ENCODE measurements at regions of chr17 and their contacts with region 1.

Region 1: DNA sequence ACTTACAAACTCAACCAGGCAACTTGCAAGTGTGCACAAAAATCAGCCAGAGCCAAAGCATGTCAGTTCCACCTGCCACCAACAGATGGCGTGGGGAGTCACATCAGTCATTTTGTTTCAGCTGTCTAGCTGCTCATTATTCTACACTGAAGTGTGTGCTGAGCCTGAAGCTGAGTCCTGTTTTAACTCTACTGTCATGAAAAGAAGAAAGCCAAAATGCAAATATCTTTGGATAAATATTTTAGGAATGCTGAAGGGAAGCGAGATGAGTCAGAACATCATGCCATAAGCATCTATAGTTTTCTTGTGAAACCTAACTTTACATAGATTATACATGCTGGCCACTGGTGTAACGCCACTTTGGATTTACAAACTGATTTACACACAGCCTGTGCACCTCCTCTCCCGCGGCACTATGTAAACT is 172.6 kb downstream of the CDK5R1 start:
- DNase-seq: peak; percentile 81
- ATAC-seq: peak; percentile 74
- H3K4me3 Mint-ChIP-seq: no peak overlapping the region
- H3K27ac Mint-ChIP-seq: no peak overlapping the region
- H3K4me1 Mint-ChIP-seq: no peaks in the 10 kb centered on the region
- H3K27me3 Mint-ChIP-seq: no peaks in the 10 kb centered on the region

Region 2: GRCh38 chr17:32671896-32672295 is 12.5 kb after region 1 on chr17:
- CTCF ChIA-PET with region 1: interaction called, 15 read pairs
- POLR2A ChIA-PET with region 1: no interaction called
- intact Hi-C with region 1: no loop called
- DNase-seq: no peak
- ATAC-seq: no peak
- H3K4me3 Mint-ChIP-seq: no peak overlapping the region
- H3K27ac Mint-ChIP-seq: no peak overlapping the region
- H3K4me1 Mint-ChIP-seq: no peaks in the 10 kb centered on the region
- H3K27me3 Mint-ChIP-seq: no peaks in the 10 kb centered on the region

Measured in activated CD4-positive, alpha-beta T cell treated with anti-CD3 and anti-CD28 coated beads for 36 hours (primary cell).